HepG2 (cell line): ENCODE measurements at regions of chr12 and their contacts with region 1.

Region 1: DNA sequence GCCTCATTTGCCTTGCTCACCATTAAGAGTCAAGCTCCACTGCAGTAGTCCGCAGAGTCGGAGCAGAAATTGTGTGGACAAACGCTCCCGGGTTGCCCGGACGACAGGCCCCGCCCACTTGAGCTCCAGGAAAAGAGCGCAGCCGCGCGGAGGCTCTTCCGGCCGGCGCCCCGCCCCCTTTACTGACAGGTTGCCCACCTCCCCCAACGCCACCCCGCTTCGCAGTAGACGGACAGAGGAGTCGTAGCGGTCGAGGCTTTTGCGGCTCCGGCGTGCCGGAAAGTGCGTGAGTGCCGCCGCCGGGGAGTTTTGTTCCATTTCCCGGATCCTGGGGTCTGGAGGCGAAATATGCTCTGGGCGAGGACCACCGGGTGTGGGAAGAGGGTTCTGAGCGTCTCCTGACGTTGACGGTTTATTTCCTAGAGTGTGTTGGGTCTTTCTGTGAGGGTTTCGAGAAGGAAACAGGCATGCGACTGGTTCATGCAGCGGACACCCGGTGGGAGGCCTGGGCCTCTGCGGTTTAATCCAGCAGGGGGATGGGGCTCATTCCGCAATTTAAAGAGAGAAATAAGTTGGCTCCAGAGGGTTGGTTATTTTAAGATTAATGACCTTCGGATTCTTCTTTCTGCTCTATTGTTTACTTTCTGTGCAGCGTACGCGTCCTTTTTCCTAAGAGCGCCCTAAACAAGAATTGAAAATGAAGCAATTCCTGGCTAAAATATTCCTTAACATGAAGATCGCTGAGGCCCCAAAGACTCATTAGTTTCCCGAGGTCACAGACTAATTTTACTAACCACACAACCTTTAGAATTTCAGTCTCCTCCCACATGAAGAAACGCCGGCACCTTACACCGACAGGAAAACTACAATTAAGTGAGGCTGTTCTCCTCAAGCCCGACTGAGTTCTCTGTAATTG is at the starts of genes DNAI7 and ETFRF1:
- DNase-seq: peak; percentile 91
- ATAC-seq: peak; percentile 97
- H3K4me3 ChIP-seq: peak within 1 kb of the TSS; percentile 79 to 90 (median 81)
- H3K27ac ChIP-seq: peak within 1 kb of the TSS; percentile 92
- H3K4me1 ChIP-seq: peaks cover 20% of the 10 kb centered on the region
- H3K27me3 ChIP-seq: no peaks in the 10 kb centered on the region
- CTCF ChIP-seq: no peak
- EP300 ChIP-seq: no peak
- POLR2A ChIP-seq: peak; percentile 84 to 89
- RAD21 ChIP-seq: peak; percentile 21; the same call in 1 of the 2 replicates
- total RNA-seq, gene DNAI7: 0.04 TPM in 1 of 2 replicates, not detected in the other
- total RNA-seq, gene ETFRF1: 7.0 and 9.3 TPM in 2 replicates

Region 2: GRCh38 chr12:26396402-26396801 is 1201.1 kb after region 1 on chr12:
- CTCF ChIA-PET with region 1: no interaction called
- POLR2A ChIA-PET with region 1: no interaction called
- in situ Hi-C with region 1: no loop called
- intact Hi-C with region 1: loop called (anchors 5 kb)
- DNase-seq: no peak
- ATAC-seq: no peak
- H3K4me3 ChIP-seq: no peak overlapping the region
- H3K27ac ChIP-seq: no peak overlapping the region
- H3K4me1 ChIP-seq: no peaks in the 10 kb centered on the region
- H3K27me3 ChIP-seq: no peaks in the 10 kb centered on the region
- CTCF ChIP-seq: no peak
- EP300 ChIP-seq: no peak
- POLR2A ChIP-seq: no peak
- RAD21 ChIP-seq: no peak